Heart left ventricle (tissue), 16 donors: ENCODE measurements at regions of chr12 and their contacts with region 1.

Region 1: DNA sequence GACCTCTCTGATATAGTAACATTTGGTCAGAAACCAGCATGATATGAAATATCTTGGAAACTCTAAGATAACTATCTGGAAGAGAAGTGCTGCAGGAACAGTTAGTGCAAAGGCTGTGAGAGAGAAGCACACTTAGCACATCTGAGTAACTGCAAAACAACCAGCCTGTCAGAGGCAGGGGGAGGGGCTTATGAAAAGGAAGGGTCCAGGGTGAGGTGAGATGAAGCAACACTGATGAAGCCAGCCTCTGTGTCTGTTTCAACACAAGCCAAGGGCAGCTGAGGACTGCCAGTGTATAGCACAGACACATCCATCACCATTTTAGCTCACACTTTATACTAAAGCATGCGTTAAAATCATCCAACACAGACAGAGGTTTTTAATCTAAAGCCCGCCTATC is 37.4 kb upstream of the OVCH1 start:
- DNase-seq: no peak
- ATAC-seq: peak in 1 of 4 donors; percentile 27
- H3K4me3 ChIP-seq: no peak overlapping the region
- H3K27ac ChIP-seq: no peak overlapping the region
- H3K4me1 ChIP-seq: no peaks in the 10 kb centered on the region
- H3K27me3 ChIP-seq: no peaks in the 10 kb centered on the region
- CTCF ChIP-seq: no peak
- POLR2A ChIP-seq: no peak

Region 2: GRCh38 chr12:30197392-30198047 is 662.6 kb after region 1 on chr12:
- intact Hi-C with region 1: loop called in 1 of 10 experiments (anchors 10 kb)
- DNase-seq: no peak
- ATAC-seq: no peak
- H3K4me3 ChIP-seq: no peak overlapping the region
- H3K27ac ChIP-seq: no peak overlapping the region
- H3K4me1 ChIP-seq: peaks cover 0 to 10% (median 1%) of the 10 kb centered on the region in 12 donors
- H3K27me3 ChIP-seq: peaks cover 0 to 34% (median 12%) of the 10 kb centered on the region in 9 donors
- CTCF ChIP-seq: no peak
- POLR2A ChIP-seq: no peak

Region 3: DNA sequence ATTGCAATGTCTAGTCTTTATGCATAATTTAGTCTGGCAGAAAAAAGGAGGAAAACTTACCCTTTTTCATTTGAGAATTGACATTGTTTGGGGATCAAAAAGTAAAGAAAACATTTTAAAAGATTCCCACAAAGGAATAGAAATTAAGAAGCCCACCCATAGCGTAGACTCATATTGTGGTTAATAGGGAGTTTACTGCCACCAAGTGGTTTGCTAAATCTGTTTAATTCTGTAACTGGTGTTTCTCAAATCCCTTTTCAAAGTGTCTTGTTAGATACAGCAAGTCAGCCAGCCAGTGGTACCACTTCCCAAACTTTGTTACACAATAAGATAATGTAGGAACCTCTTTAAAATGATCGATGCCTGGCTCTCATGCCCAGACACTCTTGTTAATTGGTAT is 980.4 kb after region 1 on chr12:
- intact Hi-C with region 1: loop called in 1 of 10 experiments (anchors 10 kb)
- DNase-seq: no peak
- ATAC-seq: peak in 1 of 4 donors; percentile 46
- H3K4me3 ChIP-seq: no peak overlapping the region
- H3K27ac ChIP-seq: no peak overlapping the region
- H3K4me1 ChIP-seq: peaks cover 0 to 14% (median 0%) of the 10 kb centered on the region in 12 donors
- H3K27me3 ChIP-seq: no peaks in the 10 kb centered on the region
- CTCF ChIP-seq: peak in 10 of 12 donors; percentile 8 to 50 (median 36)
- POLR2A ChIP-seq: no peak

Region 4: GRCh38 chr12:30533558-30534265 is 998.8 kb after region 1 on chr12:
- intact Hi-C with region 1: loop called in 1 of 10 experiments (anchors 10 kb)
- DNase-seq: no peak
- ATAC-seq: no peak
- H3K4me3 ChIP-seq: no peak overlapping the region
- H3K27ac ChIP-seq: no peak overlapping the region
- H3K4me1 ChIP-seq: no peaks in the 10 kb centered on the region
- H3K27me3 ChIP-seq: no peaks in the 10 kb centered on the region
- CTCF ChIP-seq: no peak
- POLR2A ChIP-seq: no peak